Activated T-helper 2 cell treated with anti-CD3 and anti-CD28 coated beads, Interferon-gamma antibody, Interleukin-2, Interleukin-4, amounts not matched to agents 10 μg/mL and 5 μg/mL and 100 μg/mL, durations not matched to agents 14 hours and 24 hours and 36 hours (primary cell): ENCODE measurements at regions of chr2 and their contacts with region 1.

Region 1: DNA sequence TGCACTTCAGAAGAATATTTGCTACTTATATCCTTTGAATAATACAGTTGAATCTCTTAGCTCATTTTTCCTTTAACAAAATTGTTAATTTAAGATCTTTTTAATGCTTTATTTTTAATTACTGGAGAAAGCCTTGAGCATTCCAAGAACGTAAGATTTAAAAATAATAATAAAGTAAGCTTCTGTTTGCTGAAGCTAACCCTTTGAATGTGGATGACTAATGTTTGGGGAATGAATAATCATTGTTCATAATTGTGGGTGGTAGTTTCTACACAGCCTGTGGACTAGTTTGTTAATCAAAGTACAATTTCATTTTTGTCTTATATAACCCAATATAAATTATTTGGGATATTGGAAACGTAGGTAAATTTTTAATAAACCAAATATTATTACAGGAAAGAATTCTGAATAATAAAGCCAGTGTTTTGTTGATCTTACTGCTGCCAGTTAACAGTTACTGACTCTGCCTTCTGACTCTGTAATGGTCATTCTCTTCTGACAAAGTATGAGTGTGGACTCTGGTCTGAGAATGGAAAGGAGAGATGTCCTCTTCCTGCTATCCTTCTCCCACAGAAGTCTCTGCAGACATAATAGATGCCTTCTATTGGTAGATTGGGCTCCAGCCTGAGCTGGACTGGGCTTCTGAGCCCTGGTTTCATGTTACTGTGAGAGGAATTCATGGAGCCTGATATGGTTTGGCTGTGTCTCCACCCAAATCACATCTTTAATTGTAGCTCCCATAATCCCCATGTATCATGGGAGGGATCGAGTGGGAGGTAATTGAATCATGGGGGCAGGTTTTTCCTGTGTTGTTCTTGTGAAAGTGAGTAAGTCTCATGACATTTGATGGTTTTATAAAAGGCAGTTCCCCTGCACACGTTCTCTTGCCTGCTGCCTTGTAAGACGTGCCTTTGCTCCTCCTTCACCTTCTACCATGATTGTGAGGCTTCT is 292.7 kb upstream of the SLC39A10 start:
- DNase-seq: no peak
- H3K4me3 Mint-ChIP-seq: no peak overlapping the region
- H3K27ac Mint-ChIP-seq: no peak overlapping the region
- H3K4me1 Mint-ChIP-seq: peaks cover 22% of the 10 kb centered on the region
- H3K27me3 Mint-ChIP-seq: no peaks in the 10 kb centered on the region

Region 2: GRCh38 chr2:195330513-195330956 is 33.8 kb before region 1 on chr2:
- intact Hi-C with region 1: no loop called
- DNase-seq: no peak
- H3K4me3 Mint-ChIP-seq: no peak overlapping the region
- H3K27ac Mint-ChIP-seq: no peak overlapping the region
- H3K4me1 Mint-ChIP-seq: peaks cover 3% of the 10 kb centered on the region
- H3K27me3 Mint-ChIP-seq: peaks cover 4% of the 10 kb centered on the region

Region 3: DNA sequence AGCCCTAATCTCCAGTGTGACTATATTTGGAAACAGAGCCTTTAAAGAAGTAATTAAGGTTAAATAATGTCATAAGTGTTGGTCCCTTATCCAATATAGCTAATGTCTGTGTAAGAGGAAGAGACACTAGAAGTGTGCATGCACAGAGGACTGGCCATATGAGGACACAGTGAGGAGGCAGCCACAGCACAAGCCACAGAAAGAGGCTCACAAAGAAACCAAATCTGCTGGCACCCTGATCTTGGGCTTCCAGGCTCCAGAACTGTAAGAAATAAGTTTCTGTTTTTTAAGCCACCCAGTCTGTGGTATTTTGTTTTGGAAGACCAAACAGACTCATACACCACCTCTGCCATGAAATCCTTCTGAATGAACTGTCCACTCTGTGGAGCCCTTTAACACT is 106.3 kb after region 1 on chr2:
- intact Hi-C with region 1: loop called (anchors 5 kb)
- DNase-seq: no peak
- H3K4me3 Mint-ChIP-seq: no peak overlapping the region
- H3K27ac Mint-ChIP-seq: no peak overlapping the region
- H3K4me1 Mint-ChIP-seq: peaks cover 22% of the 10 kb centered on the region
- H3K27me3 Mint-ChIP-seq: no peaks in the 10 kb centered on the region

Region 4: DNA sequence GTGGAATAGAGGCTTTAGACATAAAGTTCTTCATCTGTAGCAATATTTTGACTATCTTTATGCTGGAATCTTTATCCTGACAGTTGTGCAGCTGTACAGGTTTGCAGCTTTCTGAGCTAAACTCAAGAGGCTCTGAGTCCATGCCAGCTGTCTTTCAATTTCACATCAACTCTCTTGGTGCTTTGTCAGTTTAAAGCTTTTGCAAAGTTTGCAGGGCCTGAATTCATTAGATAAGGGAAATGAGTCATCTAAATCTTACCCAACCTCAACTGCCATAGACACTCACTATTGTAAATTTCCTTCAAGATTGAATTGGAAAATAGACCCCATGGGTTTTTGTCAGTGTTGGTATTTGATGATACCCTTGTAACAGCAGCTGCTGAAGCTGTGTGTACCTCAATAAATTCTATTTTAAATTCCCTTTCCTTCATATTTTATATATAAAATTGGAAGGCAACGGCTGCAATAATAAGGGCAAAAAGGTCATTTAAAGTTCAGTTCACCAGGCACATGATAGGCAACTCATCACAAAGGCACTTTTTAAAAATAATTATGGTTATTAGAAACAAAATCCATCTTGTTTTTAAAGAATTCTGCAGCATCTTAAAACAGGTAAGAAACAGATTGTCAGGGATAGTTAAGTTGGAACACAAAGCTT is 122.8 kb after region 1 on chr2:
- intact Hi-C with region 1: loop called (anchors 5 kb)
- DNase-seq: peak; percentile 28
- H3K4me3 Mint-ChIP-seq: no peak overlapping the region
- H3K27ac Mint-ChIP-seq: peak overlapping the region; percentile 45
- H3K4me1 Mint-ChIP-seq: peaks cover 44% of the 10 kb centered on the region
- H3K27me3 Mint-ChIP-seq: no peaks in the 10 kb centered on the region